WTC11 (cell line): ENCODE measurements at regions of chr14 and their contacts with region 1.

Region 1: GRCh38 chr14:53929871-53930715 is 26.5 kb downstream of the BMP4 start:
- DNase-seq: peak; percentile 83
- ATAC-seq: peak; percentile 96
- H3K4me3 Mint-ChIP-seq: no peak overlapping the region
- H3K27ac Mint-ChIP-seq: no peak overlapping the region
- H3K4me1 Mint-ChIP-seq: peaks cover 18% of the 10 kb centered on the region
- H3K27me3 Mint-ChIP-seq: no peaks in the 10 kb centered on the region
- CTCF ChIP-seq: peak; percentile 70; the same call in 1 of the 2 replicates

Region 2: DNA sequence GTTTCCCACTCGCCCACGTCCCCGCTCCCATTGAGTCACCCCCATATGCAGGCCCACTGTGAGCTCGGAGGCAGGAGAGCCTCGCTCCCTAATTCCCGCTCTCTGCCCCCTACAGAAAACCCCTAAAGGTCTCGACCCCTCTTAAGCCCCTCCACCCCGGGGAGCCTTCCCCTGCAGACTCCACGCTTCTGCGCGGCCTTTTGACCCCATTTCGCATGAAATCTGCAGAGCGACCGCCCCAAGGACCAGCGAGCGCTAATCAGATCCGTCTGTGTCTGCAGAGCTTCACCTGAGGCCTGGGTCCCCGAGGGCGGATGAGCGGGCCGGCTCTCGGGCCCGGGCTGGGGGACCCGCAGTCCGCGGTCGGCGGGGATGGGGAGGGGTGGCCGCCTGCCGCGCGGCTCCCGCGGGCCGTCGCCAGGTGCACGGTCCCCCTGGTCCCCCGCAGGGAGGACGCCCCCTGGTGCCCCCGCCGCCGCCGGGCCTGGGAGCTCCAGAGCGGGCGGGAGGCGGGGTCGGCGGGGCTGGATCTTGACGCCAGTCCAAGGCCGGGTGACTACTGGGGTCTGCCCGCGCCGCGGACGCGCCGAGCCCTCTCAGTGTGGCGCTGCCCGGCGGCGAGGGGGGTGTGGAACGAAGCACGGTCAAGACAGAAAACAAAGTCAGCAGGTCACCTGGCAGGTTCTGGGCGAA is 16.5 kb after region 1 on chr14:
- CTCF ChIA-PET with region 1: interaction called, 21 read pairs
- POLR2A ChIA-PET with region 1: no interaction called
- DNase-seq: peak; percentile 58
- ATAC-seq: peak; percentile 47
- H3K4me3 Mint-ChIP-seq: peak overlapping the region; percentile 75
- H3K27ac Mint-ChIP-seq: no peak overlapping the region
- H3K4me1 Mint-ChIP-seq: peaks cover 78% of the 10 kb centered on the region
- H3K27me3 Mint-ChIP-seq: peaks cover 76% of the 10 kb centered on the region
- CTCF ChIP-seq: no peak